ENCODE measurements at regions of chr12 and their contacts with region 1.

Region 1: GRCh38 chr12:49296034-49296835 is 1.3 kb downstream of the PRPH start:
- DNase-seq: peak; percentile 45
- H3K4me3 Mint-ChIP-seq: peak overlapping the region; percentile 67
- H3K27ac Mint-ChIP-seq: no peak overlapping the region
- H3K4me1 Mint-ChIP-seq: peaks cover 6% of the 10 kb centered on the region
- H3K27me3 Mint-ChIP-seq: peaks cover 11% of the 10 kb centered on the region
- CTCF ChIP-seq: peak; percentile 92

Region 2: GRCh38 chr12:49331380-49332222 is 35.4 kb after region 1 on chr12:
- CTCF ChIA-PET with region 1: interaction called, 57 read pairs
- POLR2A ChIA-PET with region 1: no interaction called
- intact Hi-C with region 1: no loop called
- DNase-seq: peak; percentile 51
- H3K4me3 Mint-ChIP-seq: no peak overlapping the region
- H3K27ac Mint-ChIP-seq: no peak overlapping the region
- H3K4me1 Mint-ChIP-seq: no peaks in the 10 kb centered on the region
- H3K27me3 Mint-ChIP-seq: no peaks in the 10 kb centered on the region
- CTCF ChIP-seq: peak; percentile 72

Region 3: GRCh38 chr12:49336645-49337584 is 40.7 kb after region 1 on chr12 and contains the start of gene C1QL4:
- CTCF ChIA-PET with region 1: interaction called, 57 read pairs
- POLR2A ChIA-PET with region 1: no interaction called
- intact Hi-C with region 1: no loop called
- DNase-seq: peak; percentile 70
- H3K4me3 Mint-ChIP-seq: peak within 1 kb of the TSS; percentile 59
- H3K27ac Mint-ChIP-seq: no peak within 1 kb of the TSS
- H3K4me1 Mint-ChIP-seq: peaks cover 10% of the 10 kb centered on the region
- H3K27me3 Mint-ChIP-seq: peaks cover 15% of the 10 kb centered on the region
- CTCF ChIP-seq: peak; percentile 97
- total RNA-seq, gene C1QL4: 0.20 TPM in 1 of 2 replicates, not detected in the other